WTC11 (cell line): ENCODE measurements at regions of chr3 and their contacts with region 1.

Region 1: DNA sequence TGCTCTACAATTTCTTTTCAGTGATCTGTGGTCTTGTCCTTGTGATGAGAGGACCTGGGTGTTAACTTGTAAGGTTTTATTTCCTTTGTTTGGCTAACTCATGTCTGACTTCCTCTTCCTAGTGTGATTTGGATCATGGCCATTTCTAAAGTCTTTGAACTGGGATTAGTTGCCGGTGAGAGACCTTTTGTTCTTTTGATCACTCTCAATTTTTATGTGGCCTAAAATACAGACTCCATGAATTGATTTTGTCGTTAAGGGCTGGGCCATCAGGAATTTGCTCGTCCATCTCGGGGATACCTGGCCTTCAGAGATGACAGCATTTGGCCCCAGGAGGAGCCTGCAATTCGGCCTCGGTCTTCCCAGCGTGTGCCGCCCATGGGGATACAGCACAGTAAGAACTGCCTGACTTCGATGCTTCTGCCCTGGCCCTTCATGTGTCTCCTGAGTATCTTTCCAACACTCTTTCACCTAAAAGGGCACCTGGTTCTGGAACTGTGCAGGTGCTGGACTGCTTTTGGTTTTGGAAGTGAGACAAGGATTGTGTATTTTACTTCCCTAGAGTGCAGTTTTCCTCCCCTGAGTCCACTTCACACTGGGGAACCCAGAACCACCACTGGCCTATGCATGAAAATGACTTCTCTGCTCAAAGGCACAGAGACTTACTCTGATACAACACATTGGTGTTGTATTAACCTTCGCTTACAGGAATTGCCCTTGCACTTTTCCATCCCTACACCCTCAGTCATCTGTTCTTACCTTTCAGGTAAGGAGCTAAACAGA is 13.1 kb upstream of the LRRC2 start:
- DNase-seq: no peak
- ATAC-seq: no peak
- H3K4me3 Mint-ChIP-seq: peak overlapping the region; percentile 86
- H3K27ac Mint-ChIP-seq: peak overlapping the region; percentile 94
- H3K4me1 Mint-ChIP-seq: peaks cover 68% of the 10 kb centered on the region
- H3K27me3 Mint-ChIP-seq: no peaks in the 10 kb centered on the region; the same call in 1 of the 2 replicates
- CTCF ChIP-seq: no peak

Region 2: DNA sequence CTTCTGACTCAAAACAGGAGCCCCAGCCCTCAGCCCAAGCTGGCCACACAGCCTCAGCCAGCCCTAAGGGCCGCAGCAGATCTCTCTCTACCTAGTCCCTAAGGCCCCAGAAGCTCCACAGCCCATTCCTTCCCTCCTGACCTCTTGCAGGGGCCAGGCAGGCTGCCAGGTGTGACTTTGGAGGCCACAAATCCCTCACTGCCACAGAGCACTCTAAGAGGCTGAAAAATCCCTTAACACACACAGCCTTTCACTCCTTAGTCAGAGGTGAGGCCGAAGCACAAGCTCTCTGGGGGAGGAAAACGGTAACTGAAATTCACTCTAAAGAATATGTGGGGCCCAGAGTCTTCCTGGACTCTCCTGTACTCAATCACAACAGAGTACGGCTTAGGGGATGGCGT is 36.4 kb before region 1 on chr3:
- CTCF ChIA-PET with region 1: interaction called, 13 read pairs
- POLR2A ChIA-PET with region 1: interaction called, 8 read pairs
- DNase-seq: no peak
- ATAC-seq: no peak
- H3K4me3 Mint-ChIP-seq: no peak overlapping the region
- H3K27ac Mint-ChIP-seq: peak overlapping the region; percentile 90
- H3K4me1 Mint-ChIP-seq: peaks cover 68% of the 10 kb centered on the region
- H3K27me3 Mint-ChIP-seq: no peaks in the 10 kb centered on the region
- CTCF ChIP-seq: no peak

Region 3: GRCh38 chr3:46558184-46559043 is 20.8 kb before region 1 on chr3:
- CTCF ChIA-PET with region 1: interaction called, 16 read pairs
- POLR2A ChIA-PET with region 1: interaction called, 6 read pairs
- DNase-seq: peak; percentile 76
- ATAC-seq: peak; percentile 88
- H3K4me3 Mint-ChIP-seq: peak overlapping the region; percentile 57
- H3K27ac Mint-ChIP-seq: peak overlapping the region; percentile 92
- H3K4me1 Mint-ChIP-seq: peaks cover 60% of the 10 kb centered on the region
- H3K27me3 Mint-ChIP-seq: no peaks in the 10 kb centered on the region; the same call in 1 of the 2 replicates
- CTCF ChIP-seq: no peak